Colonic mucosa (tissue), 4 donors: ENCODE measurements at regions of chr11 and their contacts with region 1.

Region 1: GRCh38 chr11:92886243-92886905 is 83.1 kb upstream of the MTNR1B start:
- DNase-seq: peak; percentile 58
- H3K4me3 ChIP-seq: no peak overlapping the region
- H3K27ac ChIP-seq: no peak overlapping the region
- H3K4me1 ChIP-seq: no peaks in the 10 kb centered on the region
- H3K27me3 ChIP-seq: no peaks in the 10 kb centered on the region
- CTCF ChIP-seq: peak; percentile 43

Region 2: DNA sequence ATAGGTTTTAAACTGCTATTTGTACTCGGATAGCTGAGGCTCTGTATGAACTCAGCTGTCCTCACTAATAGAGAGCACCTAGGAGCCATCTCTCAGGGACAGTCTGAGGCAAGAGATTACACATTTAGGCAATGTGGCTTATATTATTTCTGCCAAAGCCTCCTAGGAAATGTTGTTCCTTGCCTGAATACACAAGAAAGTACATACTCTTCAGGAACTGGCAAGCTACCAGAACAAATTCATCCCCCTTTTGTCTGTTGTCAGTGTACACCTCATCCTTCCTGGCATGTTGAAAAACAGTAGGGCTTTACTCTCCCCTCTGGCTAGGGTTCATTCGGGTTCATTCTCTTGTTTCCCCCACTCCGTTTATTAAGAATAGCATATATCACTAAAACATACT is 1277.7 kb before region 1 on chr11:
- intact Hi-C with region 1: no loop called
- DNase-seq: no peak
- H3K4me3 ChIP-seq: no peak overlapping the region
- H3K27ac ChIP-seq: no peak overlapping the region
- H3K4me1 ChIP-seq: no peaks in the 10 kb centered on the region
- H3K27me3 ChIP-seq: no peaks in the 10 kb centered on the region
- CTCF ChIP-seq: no peak

Region 3: DNA sequence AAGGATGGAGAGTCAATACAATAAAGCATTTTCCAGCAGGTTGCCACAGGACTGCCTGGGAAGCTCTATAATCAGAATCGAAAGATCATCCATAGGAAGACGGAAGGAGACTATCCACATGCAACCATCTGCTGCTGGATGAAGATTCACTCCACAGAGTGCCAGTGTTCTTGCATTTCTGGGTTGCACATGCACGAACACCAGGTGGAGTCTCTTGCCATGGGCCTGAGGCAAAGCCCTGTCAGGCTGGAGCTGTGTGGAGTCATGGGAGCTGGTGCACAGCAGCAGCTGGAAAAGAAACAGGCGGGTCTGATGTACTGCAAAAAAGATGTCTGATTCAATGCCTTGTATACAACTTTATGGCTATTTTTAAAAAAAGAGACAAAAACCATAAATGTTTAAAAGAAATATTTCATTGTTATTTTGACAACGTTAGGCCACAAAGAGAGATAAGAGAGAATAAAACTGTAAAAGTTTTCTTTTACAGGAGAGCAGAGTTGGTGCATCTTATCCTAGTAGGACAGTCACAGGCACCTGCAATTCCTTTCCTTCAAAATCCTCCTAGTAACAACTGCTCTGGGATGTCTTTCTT is 674.7 kb before region 1 on chr11:
- intact Hi-C with region 1: loop called (anchors 10 kb)
- DNase-seq: no peak
- H3K4me3 ChIP-seq: no peak overlapping the region
- H3K27ac ChIP-seq: no peak overlapping the region
- H3K4me1 ChIP-seq: no peaks in the 10 kb centered on the region
- H3K27me3 ChIP-seq: no peaks in the 10 kb centered on the region
- CTCF ChIP-seq: no peak

Region 4: GRCh38 chr11:92735039-92735438 is 151.3 kb before region 1 on chr11:
- intact Hi-C with region 1: loop called (anchors 5 kb)
- DNase-seq: no peak
- H3K4me3 ChIP-seq: no peak overlapping the region
- H3K27ac ChIP-seq: no peak overlapping the region
- H3K4me1 ChIP-seq: no peaks in the 10 kb centered on the region
- H3K27me3 ChIP-seq: no peaks in the 10 kb centered on the region
- CTCF ChIP-seq: no peak

Region 5: GRCh38 chr11:92838759-92839310 is 47.5 kb before region 1 on chr11:
- intact Hi-C with region 1: no loop called
- DNase-seq: no peak
- H3K4me3 ChIP-seq: no peak overlapping the region
- H3K27ac ChIP-seq: no peak overlapping the region
- H3K4me1 ChIP-seq: peaks cover 3% of the 10 kb centered on the region
- H3K27me3 ChIP-seq: no peaks in the 10 kb centered on the region
- CTCF ChIP-seq: no peak

Region 6: DNA sequence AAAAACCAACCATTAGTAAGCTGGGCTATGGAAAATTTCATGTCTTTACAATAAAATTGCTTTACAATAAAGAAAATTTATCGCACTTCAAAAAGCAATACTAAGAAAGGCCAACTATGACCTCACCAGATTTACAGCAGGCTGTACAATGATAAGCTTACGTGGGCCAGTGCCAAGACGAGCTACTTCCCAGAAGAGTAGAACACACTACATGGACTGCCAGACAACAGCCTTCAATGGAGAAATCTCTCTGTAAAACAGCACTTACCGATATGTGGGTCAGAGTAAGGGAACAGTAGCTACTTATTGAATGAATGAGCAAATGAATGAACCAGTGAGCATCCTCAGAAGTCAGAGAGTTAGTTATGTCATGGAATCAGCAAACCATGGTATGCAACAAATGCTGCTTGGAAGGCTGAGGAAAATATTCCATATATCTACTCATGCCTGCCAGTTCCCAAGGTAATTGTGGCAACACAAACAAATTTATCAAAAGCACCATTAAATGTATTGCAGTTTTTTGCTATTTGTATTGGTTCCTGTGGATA is 237.1 kb after region 1 on chr11:
- intact Hi-C with region 1: no loop called
- DNase-seq: peak; percentile 89
- H3K4me3 ChIP-seq: no peak overlapping the region
- H3K27ac ChIP-seq: peak overlapping the region; percentile 35
- H3K4me1 ChIP-seq: no peaks in the 10 kb centered on the region
- H3K27me3 ChIP-seq: no peaks in the 10 kb centered on the region
- CTCF ChIP-seq: no peak